Activated CD8-positive, alpha-beta T cell treated with anti-CD3 and anti-CD28 coated beads, Interleukin-2, amount 10 ng/mL, durations not matched to agents 7 days and 5 days (primary cell): ENCODE measurements at regions of chr10 and their contacts with region 1.

Region 1: DNA sequence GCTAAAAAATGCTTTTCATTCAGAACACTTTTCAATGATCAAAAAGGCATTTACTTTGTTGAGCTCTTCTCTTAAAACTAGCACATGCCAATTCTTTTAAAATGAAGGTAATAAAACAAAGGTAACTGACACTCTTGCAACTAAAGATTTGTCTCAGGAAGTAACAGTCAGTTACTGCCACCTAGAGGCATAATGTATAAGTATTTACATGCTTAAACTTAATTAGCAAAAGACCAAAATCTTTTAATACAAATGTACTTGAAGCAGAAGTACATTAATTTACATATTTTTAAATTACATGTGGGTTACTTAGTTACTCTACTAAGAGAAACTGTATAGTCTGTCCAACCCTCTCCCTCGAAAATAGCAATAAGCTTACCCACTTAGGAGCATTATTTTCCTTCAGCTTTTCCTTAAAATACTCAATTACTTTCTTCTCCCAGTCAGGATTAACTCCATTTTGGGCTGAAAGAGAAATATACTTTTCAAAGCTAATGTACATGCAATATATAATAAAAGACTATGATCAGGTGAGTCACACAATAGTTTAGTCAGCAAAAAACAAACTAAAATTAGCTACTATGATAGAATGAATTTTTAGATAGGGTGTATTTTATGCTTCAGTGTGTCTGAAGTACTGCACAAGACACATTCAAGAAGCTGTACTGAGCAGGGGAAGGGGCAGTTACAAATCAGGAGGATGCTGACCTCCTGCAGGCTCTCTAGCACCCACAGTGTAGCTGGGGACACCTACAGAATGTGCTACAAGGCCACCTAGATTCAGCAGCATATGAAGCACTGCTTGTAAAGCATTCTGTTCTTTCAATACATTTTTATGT is 13.0 kb downstream of the MCMBP start:
- DNase-seq: no peak
- ATAC-seq: peak; percentile 61
- H3K4me3 Mint-ChIP-seq: no peak overlapping the region
- H3K27ac Mint-ChIP-seq: no peak overlapping the region
- H3K4me1 Mint-ChIP-seq: peaks cover 41% of the 10 kb centered on the region
- H3K27me3 Mint-ChIP-seq: no peaks in the 10 kb centered on the region

Region 2: GRCh38 chr10:119725828-119726675 is 133.6 kb before region 1 on chr10 and contains the start of gene INPP5F:
- CTCF ChIA-PET with region 1: interaction called, 20 read pairs
- POLR2A ChIA-PET with region 1: no interaction called
- DNase-seq: peak; percentile 99
- ATAC-seq: peak; percentile 94
- H3K4me3 Mint-ChIP-seq: peak within 1 kb of the TSS; percentile 87
- H3K27ac Mint-ChIP-seq: peak within 1 kb of the TSS; percentile 81
- H3K4me1 Mint-ChIP-seq: peaks cover 46% of the 10 kb centered on the region
- H3K27me3 Mint-ChIP-seq: no peaks in the 10 kb centered on the region
- total RNA-seq, gene INPP5F: 15.9 to 17.6 TPM

Region 3: DNA sequence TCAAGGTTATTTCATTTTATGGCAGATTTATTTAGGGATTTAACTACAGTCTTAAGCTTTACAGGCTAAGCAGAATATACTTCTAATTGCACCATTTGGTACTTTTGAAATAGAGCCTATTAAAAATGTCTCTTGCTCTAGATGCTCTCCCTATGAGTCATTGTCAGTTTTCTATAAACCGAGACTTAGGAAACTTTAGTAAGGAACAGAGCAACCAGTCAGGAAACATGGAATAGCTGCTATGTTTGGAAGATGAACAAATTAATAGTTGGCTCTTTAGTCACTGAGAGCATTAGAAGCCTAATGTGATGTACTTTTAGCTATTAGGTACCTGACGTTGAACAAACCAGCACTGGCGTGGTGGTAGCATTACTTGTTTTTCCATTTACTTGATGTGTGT is 98.5 kb before region 1 on chr10:
- CTCF ChIA-PET with region 1: interaction called, 18 read pairs
- POLR2A ChIA-PET with region 1: no interaction called
- DNase-seq: no peak
- ATAC-seq: no peak
- H3K4me3 Mint-ChIP-seq: no peak overlapping the region
- H3K27ac Mint-ChIP-seq: no peak overlapping the region
- H3K4me1 Mint-ChIP-seq: peaks cover 3% of the 10 kb centered on the region
- H3K27me3 Mint-ChIP-seq: no peaks in the 10 kb centered on the region

Region 4: DNA sequence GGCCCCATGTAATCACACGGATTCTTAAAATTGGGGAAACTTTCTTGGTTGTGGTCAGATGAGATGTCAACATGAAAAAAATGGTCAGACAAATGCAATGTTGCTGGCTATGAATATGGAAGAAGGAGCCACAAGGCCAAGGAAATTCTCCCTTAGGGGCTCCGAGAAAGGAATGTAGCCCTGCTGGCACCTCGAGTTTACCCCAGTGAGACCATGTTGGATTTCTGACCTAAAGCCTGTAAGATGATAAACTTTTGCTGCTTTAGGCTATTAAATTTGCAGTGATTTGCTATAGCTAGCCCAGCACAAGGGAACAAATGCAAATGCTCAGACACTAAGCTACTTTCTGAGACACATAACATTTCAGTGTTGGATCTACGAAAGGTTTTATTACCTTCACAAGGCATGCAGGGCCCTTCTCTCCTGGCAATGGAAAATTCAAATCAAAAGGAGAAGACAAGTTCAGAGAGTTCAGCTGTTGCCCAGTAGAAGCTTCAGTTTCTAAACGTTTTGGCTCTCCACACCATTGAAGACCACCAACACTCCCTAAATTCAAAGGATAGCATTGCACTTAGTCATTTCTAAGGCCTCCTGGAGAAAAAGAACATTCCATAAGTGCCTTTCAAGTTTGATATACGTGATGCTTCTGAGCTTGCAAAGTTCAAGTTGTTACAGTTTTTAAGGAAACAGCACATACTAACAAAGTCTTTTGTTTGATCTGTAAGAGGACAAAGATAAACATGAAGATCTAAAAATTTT is 10.4 kb before region 1 on chr10:
- CTCF ChIA-PET with region 1: interaction called, 14 read pairs
- POLR2A ChIA-PET with region 1: no interaction called
- DNase-seq: no peak
- ATAC-seq: no peak
- H3K4me3 Mint-ChIP-seq: no peak overlapping the region
- H3K27ac Mint-ChIP-seq: no peak overlapping the region
- H3K4me1 Mint-ChIP-seq: peaks cover 3% of the 10 kb centered on the region
- H3K27me3 Mint-ChIP-seq: no peaks in the 10 kb centered on the region

Region 5: DNA sequence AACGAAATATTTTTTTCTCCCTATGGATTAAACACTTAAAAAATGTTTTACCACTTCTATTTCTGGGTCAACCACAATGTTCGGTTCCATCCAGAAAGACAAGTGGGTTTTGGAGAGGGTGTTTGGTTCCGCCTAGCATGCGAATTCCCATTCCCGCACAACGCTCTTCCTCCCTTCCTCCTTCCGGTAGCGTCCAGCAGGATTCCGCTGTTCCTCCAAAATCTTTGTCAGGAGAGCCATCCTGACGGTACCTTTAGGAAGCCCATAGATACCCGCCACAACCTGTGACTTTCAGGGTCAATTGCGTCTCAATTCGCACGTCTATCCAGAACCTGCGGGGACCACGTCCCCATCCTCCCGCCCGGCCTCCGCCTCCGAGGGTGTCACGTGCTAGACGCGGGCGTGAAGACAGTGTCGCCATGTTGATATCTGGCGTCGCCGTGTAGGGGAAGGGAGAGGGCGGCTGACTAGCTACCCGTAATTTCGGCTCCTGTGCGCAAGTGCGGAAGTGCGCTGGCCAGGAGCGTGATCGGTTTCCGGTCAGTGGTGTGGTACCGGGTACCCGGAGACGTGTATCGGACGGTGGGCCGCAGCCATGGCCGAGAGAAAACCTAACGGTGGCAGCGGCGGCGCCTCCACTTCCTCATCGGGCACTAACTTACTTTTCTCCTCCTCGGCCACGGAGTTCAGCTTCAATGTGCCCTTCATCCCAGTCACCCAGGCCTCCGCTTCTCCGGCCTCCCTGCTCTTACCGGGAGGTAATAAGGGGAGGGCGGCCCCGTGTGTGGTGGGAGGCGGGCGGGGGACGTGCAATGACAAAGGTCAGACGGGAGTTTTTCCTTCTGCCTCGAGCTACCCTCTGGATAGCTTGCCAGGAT is 32.8 kb after region 1 on chr10 and contains the start of gene SEC23IP:
- CTCF ChIA-PET with region 1: interaction called, 11 read pairs
- POLR2A ChIA-PET with region 1: no interaction called
- DNase-seq: peak; percentile 95
- ATAC-seq: peak; percentile 100
- H3K4me3 Mint-ChIP-seq: peak within 1 kb of the TSS; percentile 94
- H3K27ac Mint-ChIP-seq: peak within 1 kb of the TSS; percentile 94
- H3K4me1 Mint-ChIP-seq: peaks cover 37% of the 10 kb centered on the region
- H3K27me3 Mint-ChIP-seq: no peaks in the 10 kb centered on the region
- total RNA-seq, gene SEC23IP: 53.8 to 58.9 TPM

Region 6: GRCh38 chr10:120085096-120085796 is 225.6 kb after region 1 on chr10:
- CTCF ChIA-PET with region 1: no interaction called
- POLR2A ChIA-PET with region 1: no interaction called
- DNase-seq: no peak
- ATAC-seq: no peak
- H3K4me3 Mint-ChIP-seq: no peak overlapping the region
- H3K27ac Mint-ChIP-seq: no peak overlapping the region
- H3K4me1 Mint-ChIP-seq: no peaks in the 10 kb centered on the region
- H3K27me3 Mint-ChIP-seq: no peaks in the 10 kb centered on the region